CD4-positive, alpha-beta T cell (primary cell): ENCODE measurements at regions of chr12 and their contacts with region 1.

Region 1: DNA sequence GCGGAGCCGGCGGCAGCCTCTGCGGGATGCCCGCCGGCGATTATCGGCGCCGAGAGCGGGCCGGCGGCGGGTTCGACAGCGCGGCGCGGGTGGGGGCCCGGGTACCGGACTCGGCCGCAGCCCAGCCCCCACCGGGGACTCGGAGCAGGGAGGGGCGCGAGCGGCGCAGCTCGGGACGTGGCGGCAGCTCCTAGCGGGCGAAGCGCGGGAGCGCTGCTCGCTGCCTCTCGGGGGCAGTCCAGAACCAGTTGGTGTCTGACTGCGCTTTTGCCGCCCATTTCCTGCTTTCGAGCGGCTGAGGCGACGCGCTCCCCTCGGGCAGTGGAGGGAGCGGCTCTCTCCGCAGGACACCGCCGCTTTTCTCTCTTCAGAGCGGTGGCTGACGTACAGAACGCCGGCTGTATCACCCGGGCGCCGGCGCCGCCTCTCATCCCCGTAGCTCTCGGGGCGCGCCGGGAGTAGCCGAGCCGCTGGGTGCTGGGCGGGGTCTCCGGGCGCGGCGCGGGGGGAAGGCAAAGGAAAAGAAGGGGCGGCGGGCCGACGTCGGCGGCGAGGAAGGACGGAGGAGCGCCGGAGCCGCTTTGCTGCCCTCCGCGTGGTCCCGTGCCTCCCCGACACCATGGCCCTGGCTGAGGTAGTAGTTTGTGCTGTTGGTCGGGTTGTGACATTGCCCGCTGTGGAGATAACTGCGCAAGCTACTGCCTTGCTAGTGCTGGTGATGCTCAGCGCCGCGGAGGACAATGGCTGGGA is 136.6 kb downstream of the MON2 start:
- DNase-seq: peak; percentile 63 to 93 (median 76)
- ATAC-seq: peak; percentile 64
- H3K4me3 ChIP-seq: peak overlapping the region; percentile 82
- H3K4me3 Mint-ChIP-seq: peak overlapping the region; percentile 99
- H3K27ac ChIP-seq: peak overlapping the region; percentile 99 to 100
- H3K27ac Mint-ChIP-seq: peak overlapping the region; percentile 100
- H3K4me1 ChIP-seq: peaks cover 11% of the 10 kb centered on the region
- H3K4me1 Mint-ChIP-seq: peaks cover 42% of the 10 kb centered on the region
- H3K27me3 ChIP-seq: no peaks in the 10 kb centered on the region
- H3K27me3 Mint-ChIP-seq: no peaks in the 10 kb centered on the region
- CTCF ChIP-seq: peak; percentile 48

Region 2: DNA sequence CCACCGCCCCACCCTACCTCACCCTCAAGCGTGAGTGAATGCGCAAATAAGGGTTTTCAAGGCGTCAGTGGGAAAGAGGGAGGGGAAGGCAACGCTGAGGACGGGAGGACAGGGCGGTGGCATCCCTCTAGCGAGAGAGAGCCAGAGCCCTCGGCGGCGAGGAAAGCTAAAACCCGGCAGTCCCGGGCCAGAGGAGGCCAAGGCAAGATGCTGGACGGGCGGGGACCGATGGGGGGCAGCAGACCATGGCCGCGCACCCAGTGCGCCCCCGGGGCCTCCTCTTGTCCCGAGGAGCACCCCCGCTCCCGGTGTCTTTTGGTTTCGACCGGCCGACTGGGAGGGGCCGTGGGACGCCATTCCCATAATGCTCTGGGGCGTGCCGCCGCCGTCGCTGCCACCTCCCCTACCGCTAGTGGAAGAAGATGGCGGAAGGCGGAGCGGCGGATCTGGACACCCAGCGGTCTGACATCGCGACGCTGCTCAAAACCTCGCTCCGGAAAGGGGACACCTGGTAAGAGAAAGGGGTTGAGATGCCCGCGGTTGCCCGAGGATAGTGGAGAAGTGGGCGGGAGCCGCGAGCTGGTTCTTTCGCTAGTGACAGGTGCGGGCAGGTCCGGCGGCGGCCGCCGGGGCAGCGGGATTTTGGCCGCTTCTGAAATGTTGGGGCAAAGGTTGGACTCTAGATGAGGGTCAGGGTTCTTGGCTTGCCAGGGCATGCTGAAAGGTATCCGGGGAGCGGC is 343.1 kb before region 1 on chr12 and contains the start of gene USP15:
- CTCF ChIA-PET with region 1: no interaction called
- POLR2A ChIA-PET with region 1: interaction called, 20 read pairs
- intact Hi-C with region 1: loop called (anchors 2 to 5 kb)
- DNase-seq: peak; percentile 93 to 97 (median 95)
- ATAC-seq: peak; percentile 78
- H3K4me3 ChIP-seq: peak within 1 kb of the TSS; percentile 81
- H3K4me3 Mint-ChIP-seq: peak within 1 kb of the TSS; percentile 98
- H3K27ac ChIP-seq: peak within 1 kb of the TSS; percentile 97
- H3K27ac Mint-ChIP-seq: peak within 1 kb of the TSS; percentile 98
- H3K4me1 ChIP-seq: peaks cover 13% of the 10 kb centered on the region
- H3K4me1 Mint-ChIP-seq: peaks cover 77% of the 10 kb centered on the region
- H3K27me3 ChIP-seq: no peaks in the 10 kb centered on the region
- H3K27me3 Mint-ChIP-seq: no peaks in the 10 kb centered on the region
- CTCF ChIP-seq: peak; percentile 62
- total RNA-seq, gene USP15: 212 to 218 TPM

Region 3: GRCh38 chr12:62530596-62530995 is 72.6 kb before region 1 on chr12:
- CTCF ChIA-PET with region 1: no interaction called
- POLR2A ChIA-PET with region 1: no interaction called
- intact Hi-C with region 1: no loop called
- DNase-seq: no peak
- ATAC-seq: no peak
- H3K4me3 ChIP-seq: no peak overlapping the region
- H3K4me3 Mint-ChIP-seq: no peak overlapping the region
- H3K27ac ChIP-seq: no peak overlapping the region
- H3K27ac Mint-ChIP-seq: no peak overlapping the region
- H3K4me1 ChIP-seq: no peaks in the 10 kb centered on the region
- H3K4me1 Mint-ChIP-seq: peaks cover 8% of the 10 kb centered on the region
- H3K27me3 ChIP-seq: no peaks in the 10 kb centered on the region
- H3K27me3 Mint-ChIP-seq: no peaks in the 10 kb centered on the region
- CTCF ChIP-seq: no peak

Region 4: GRCh38 chr12:62581288-62582064 is 21.8 kb before region 1 on chr12:
- CTCF ChIA-PET with region 1: interaction called, 4 read pairs
- POLR2A ChIA-PET with region 1: interaction called, 12 read pairs
- intact Hi-C with region 1: no loop called
- DNase-seq: peak in 3 of 14 experiments; percentile 50 to 68 (median 65)
- ATAC-seq: peak; percentile 55
- H3K4me3 ChIP-seq: no peak overlapping the region
- H3K4me3 Mint-ChIP-seq: no peak overlapping the region
- H3K27ac ChIP-seq: no peak overlapping the region
- H3K27ac Mint-ChIP-seq: no peak overlapping the region
- H3K4me1 ChIP-seq: no peaks in the 10 kb centered on the region
- H3K4me1 Mint-ChIP-seq: no peaks in the 10 kb centered on the region
- H3K27me3 ChIP-seq: no peaks in the 10 kb centered on the region
- H3K27me3 Mint-ChIP-seq: no peaks in the 10 kb centered on the region
- CTCF ChIP-seq: peak; percentile 73

Region 5: DNA sequence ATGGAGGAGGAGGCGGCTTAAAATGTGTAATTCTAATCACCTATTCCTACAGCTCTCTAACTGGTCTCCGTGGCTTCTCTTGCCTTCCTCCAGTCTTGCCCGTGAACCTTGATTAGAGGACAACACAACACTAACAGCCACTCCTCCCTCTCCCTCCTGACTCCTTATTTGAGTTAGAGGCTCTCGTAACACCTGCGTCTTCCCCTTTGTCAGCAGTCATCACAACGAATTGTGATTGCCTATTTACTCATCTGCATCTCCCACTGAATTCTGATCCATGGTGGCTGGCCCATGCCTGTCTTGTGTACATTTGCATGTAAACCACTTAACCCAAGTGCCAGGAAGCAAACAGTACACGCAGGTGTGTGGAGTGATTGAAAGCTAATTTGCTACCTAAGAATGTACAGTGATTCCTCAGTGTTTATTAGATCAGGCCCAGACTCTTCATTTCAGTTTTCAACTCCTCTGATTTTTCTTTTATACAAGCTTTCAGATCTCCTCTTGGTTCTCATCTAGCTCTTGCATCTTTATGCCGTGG is 17.9 kb after region 1 on chr12:
- CTCF ChIA-PET with region 1: no interaction called
- POLR2A ChIA-PET with region 1: interaction called, 18 read pairs
- intact Hi-C with region 1: no loop called
- DNase-seq: no peak
- ATAC-seq: no peak
- H3K4me3 ChIP-seq: no peak overlapping the region
- H3K4me3 Mint-ChIP-seq: no peak overlapping the region
- H3K27ac ChIP-seq: no peak overlapping the region
- H3K27ac Mint-ChIP-seq: no peak overlapping the region
- H3K4me1 ChIP-seq: no peaks in the 10 kb centered on the region
- H3K4me1 Mint-ChIP-seq: no peaks in the 10 kb centered on the region
- H3K27me3 ChIP-seq: peaks cover 0 to 5% of the 10 kb centered on the region in 2 experiments
- H3K27me3 Mint-ChIP-seq: peaks cover 9% of the 10 kb centered on the region
- CTCF ChIP-seq: no peak

Region 6: DNA sequence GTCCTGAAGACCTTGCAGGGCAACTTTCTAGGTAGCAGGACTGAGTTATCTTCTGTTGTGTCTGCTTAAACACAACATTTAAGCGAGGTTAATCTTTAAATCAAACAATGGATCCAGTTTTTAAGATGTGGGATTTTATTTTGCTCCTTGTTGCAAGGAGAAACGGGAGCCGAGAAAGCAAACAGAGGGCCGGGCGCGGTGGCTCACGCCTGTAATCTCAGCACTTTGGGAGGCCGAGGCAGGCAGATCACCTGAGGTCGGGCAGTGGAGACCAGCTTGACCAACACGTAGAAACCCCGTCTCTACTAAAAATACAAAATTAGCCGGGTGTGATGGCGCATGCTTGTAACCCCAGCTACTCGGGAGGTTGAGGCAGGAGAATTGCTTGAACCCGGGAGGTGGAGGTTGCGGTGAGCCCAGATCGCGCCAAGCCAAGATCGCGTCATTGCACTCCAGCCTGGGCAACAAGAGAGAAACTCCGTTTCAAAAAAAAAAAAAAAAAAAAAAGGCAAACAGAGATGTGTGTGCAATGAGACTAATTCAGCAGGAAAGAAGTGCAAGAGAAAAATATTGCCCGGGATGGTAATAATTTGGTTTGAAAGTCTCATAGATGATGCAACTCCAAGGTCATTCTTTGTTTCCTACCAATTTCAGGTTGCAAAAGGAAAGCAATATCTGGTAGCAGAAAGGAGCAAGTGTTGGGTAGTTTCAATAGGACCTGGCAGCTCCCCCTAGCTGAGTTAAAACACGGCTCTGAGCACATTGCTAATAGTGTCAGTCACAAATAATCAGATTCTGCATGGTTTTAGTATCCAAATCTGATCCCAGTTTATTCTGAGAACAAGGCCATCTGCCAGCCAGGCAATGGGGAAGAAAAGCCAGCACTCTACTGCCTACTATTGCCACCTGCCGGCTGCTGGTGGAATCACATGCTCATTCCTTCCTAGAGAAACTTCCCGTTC is 190.3 kb after region 1 on chr12:
- CTCF ChIA-PET with region 1: no interaction called
- POLR2A ChIA-PET with region 1: interaction called, 9 read pairs
- intact Hi-C with region 1: loop called in 1 of 2 experiments (anchors 5 kb)
- DNase-seq: peak; percentile 53 to 82 (median 68)
- ATAC-seq: peak; percentile 73
- H3K4me3 ChIP-seq: no peak overlapping the region
- H3K4me3 Mint-ChIP-seq: no peak overlapping the region
- H3K27ac ChIP-seq: no peak overlapping the region
- H3K27ac Mint-ChIP-seq: no peak overlapping the region
- H3K4me1 ChIP-seq: no peaks in the 10 kb centered on the region
- H3K4me1 Mint-ChIP-seq: no peaks in the 10 kb centered on the region
- H3K27me3 ChIP-seq: peaks cover 0 to 2% of the 10 kb centered on the region in 2 experiments
- H3K27me3 Mint-ChIP-seq: peaks cover 4% of the 10 kb centered on the region
- CTCF ChIP-seq: peak; percentile 98